Head of caudate nucleus (tissue), 42 donors: ENCODE measurements at regions of chr12 and their contacts with region 1.

Region 1: DNA sequence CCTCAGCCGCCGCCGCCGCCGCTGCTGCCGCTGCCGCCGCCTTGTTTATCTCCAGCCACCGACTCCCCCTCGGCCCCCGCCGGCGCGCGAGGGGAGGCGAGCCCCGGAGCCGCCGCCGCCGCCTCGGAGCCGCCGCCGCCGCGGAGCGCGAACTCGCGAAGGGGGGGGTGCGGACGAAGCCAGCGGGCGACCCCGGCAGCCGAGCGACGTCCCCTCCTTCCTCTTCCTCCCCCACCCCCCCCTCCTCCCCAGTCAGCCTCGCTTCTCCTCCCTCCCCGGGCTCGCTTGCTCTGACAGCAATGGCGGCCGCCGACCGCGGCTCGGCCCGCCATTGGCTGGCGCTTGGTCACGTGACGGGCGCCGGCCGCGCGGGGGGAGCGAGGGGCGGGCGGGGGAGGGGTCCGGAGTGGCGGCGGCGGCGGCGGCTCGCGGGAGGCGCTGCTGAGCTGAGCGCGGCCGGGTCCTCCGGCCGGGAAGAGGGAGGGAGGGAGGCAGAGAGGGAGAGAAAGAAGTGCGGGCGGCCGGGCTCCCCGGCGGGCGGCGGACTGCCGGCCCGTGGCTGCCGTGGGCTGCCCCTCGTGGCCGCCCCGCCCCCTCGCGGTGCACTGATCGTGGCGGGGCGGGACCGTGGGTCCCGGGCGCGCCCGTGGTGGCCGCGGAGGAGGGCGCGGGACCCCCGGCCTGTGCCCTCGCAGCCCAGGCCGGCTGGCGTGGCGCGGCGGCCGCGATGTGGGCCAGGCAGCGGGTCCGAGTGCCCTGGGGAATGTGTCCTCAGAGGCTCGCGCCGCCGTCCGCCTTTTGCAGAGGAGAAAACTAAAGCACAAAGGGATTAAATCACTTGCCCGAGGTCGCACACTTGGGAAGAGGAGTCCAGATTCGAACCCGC is at the start of gene MED13L:
- DNase-seq: peak; percentile 50 to 94 (median 88)

Region 2: DNA sequence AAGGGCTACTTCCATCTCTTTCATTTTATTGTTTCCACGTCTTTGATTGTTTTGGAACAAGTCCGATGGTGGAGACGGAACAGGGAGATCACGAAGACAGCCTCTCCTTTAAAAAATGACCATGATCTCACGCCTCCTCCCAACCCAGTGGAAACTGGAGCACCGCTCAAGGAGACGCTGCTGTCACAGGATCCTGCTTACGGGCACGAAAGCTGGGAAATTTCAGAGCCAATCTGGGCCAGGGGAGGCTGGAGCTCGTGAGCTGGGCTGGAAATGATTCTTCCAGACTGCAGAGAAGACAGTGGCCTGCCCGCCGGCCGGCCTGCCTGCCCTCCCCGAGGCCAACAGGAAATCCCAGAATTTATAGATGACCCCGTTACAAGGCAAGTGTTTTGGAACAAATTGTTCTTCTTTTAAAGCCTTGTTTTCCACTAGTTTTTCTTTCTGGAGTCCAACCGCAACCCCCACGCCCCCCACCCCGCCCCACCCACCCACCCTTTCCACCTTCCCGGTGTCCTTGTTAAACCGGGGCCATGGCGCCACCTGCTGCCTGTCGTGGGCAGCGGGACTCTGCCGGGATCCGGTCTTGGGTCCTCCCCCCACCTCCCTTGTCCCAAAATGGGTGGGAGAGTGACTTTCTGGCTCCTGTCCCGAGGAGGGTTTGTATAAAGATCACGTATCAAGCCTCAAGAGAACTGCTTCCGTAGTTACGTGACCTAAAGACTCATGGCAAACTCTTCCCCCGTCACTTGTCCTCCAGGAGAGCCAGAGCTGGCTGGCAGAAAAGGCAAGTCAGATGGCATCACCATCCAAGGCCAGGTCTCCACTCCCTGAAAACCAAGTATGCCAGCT is 321.9 kb after region 1 on chr12:
- intact Hi-C with region 1: loop called (anchors 5 kb)
- DNase-seq: peak; percentile 44 to 89 (median 74)

Region 3: GRCh38 chr12:116703214-116703795 is 425.7 kb after region 1 on chr12:
- intact Hi-C with region 1: loop called (anchors 10 kb)
- DNase-seq: peak; percentile 37 to 92 (median 82)